Ascending aorta (tissue), 2 donors: ENCODE measurements at regions of chr3 and their contacts with region 1.

Region 1: DNA sequence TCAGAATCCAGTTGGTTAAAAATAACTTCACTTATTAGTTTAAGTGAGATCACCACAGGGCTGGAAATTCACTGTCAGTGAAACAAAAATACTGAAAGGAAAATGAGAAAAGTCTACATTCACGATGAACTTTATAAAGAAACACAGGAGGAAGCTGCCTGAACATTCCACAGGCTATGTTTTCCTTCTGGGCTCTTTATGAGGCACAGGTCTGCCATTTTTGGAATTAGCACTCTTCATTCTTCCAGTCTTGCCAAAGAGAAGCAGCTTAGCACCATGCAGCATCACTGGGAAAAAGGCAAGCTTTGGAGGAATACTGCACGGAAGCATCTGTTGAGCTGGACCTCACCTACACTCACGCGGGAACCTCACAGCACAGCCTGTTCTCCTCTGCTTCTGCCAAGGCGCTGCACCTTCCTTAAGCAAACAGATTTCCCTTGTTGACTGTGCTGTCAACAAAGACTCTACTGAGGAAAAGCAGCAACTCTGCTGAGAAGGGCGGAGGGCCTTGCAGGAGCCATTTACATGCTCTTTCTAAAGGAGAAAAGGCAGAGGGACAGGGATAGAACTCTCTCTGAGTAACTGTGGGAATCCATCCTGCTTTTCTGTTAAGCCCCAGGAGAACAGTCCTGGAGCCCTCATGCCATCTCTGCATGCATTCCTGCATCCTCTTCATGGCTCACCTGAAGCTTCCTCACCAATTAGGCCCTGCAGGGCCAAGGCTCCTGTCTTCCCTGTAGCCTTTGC is 15.7 kb downstream of the SUSD5 start:
- DNase-seq: peak in 1 of 2 donors; percentile 69
- H3K4me3 ChIP-seq: no peak overlapping the region
- H3K27ac ChIP-seq: peak overlapping the region; percentile 90 to 91
- H3K4me1 ChIP-seq: peaks cover 18 to 41% of the 10 kb centered on the region in 2 donors
- H3K27me3 ChIP-seq: no peaks in the 10 kb centered on the region
- CTCF ChIP-seq: no peak

Region 2: DNA sequence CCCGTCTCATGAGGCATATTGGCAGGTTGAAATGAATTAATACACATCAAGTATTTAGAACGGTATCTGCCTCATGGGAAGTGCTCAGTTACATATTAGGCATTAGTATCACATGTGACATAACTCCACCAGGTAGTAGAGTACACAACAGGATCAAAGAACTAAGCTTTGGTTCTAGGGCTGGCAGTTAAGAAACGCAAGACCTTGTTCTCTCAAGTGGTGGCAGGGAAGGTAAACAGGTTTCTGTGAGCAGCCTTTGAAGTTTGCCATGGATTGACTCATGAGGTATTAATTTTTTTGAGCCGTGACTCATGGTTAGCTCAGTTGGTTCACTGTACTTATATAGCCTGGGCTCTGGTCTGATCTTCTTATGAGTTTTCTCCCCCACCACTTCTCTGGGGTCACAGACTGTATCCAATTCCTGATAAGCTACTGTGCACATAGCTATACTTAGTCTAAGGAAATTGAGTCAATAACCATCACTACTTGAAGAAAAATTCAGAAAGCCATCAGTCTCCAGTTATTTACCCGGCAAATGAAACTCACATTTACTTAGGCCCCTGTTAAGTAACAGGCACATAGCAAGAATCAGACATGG is 1825.7 kb before region 1 on chr3:
- intact Hi-C with region 1: no loop called
- DNase-seq: no peak
- H3K4me3 ChIP-seq: no peak overlapping the region
- H3K27ac ChIP-seq: no peak overlapping the region
- H3K4me1 ChIP-seq: no peaks in the 10 kb centered on the region
- H3K27me3 ChIP-seq: no peaks in the 10 kb centered on the region
- CTCF ChIP-seq: no peak

Region 3: GRCh38 chr3:33023172-33024136 is 179.4 kb before region 1 on chr3:
- intact Hi-C with region 1: no loop called
- DNase-seq: no peak
- H3K4me3 ChIP-seq: no peak overlapping the region
- H3K27ac ChIP-seq: no peak overlapping the region
- H3K4me1 ChIP-seq: no peaks in the 10 kb centered on the region
- H3K27me3 ChIP-seq: no peaks in the 10 kb centered on the region
- CTCF ChIP-seq: no peak

Region 4: DNA sequence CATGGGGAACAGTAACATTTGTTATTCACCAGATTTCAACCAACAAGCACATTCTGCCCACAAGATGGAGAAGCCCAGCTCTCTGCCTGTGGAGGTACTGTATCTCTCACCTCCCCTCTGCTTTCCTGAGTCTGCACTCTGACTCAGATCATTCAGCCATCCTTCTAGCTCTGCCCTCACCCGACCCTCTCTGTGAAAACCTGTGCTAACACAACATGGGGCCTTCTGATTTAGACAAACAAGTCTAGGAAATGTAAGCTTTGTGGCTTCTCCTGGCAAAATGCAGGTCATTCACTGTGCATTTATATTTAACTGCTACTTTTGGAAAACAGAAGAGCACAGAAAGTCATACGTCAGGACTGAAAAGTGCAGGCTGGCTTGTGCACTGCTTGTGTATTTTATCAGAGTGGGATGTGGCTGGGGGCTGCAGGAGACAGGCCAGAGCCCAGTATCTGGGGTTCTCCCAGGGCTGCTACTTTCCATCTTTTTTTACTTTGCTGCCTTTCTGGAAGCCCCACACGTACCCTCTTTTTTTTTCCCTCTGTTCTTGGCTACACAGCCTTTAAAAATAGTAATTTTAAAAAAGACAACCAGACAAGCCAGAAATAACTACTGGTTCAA is 35.1 kb before region 1 on chr3:
- intact Hi-C with region 1: loop called (anchors 2 kb)
- DNase-seq: peak in 1 of 2 donors; percentile 68
- H3K4me3 ChIP-seq: no peak overlapping the region
- H3K27ac ChIP-seq: peak overlapping the region; percentile 75 to 80
- H3K4me1 ChIP-seq: peaks cover 17 to 60% of the 10 kb centered on the region in 2 donors
- H3K27me3 ChIP-seq: no peaks in the 10 kb centered on the region
- CTCF ChIP-seq: no peak

Region 5: GRCh38 chr3:33184863-33185262 is 18.0 kb before region 1 on chr3:
- intact Hi-C with region 1: loop called (anchors 2 kb)
- DNase-seq: no peak
- H3K4me3 ChIP-seq: no peak overlapping the region
- H3K27ac ChIP-seq: peak overlapping the region; percentile 37 to 43
- H3K4me1 ChIP-seq: peaks cover 0 to 13% of the 10 kb centered on the region in 2 donors
- H3K27me3 ChIP-seq: no peaks in the 10 kb centered on the region
- CTCF ChIP-seq: no peak